Esophagus squamous epithelium (tissue), 5 donors: ENCODE measurements at regions of chr5 and their contacts with region 1.

Region 1: GRCh38 chr5:39716528-39717028 is 291.8 kb upstream of the DAB2 start:
- DNase-seq: no peak
- H3K4me3 ChIP-seq: no peak overlapping the region
- H3K27ac ChIP-seq: no peak overlapping the region
- H3K4me1 ChIP-seq: no peaks in the 10 kb centered on the region
- H3K27me3 ChIP-seq: no peaks in the 10 kb centered on the region
- CTCF ChIP-seq: peak in 5 of 6 experiments; percentile 8 to 36 (median 33)
- POLR2A ChIP-seq: no peak

Region 2: DNA sequence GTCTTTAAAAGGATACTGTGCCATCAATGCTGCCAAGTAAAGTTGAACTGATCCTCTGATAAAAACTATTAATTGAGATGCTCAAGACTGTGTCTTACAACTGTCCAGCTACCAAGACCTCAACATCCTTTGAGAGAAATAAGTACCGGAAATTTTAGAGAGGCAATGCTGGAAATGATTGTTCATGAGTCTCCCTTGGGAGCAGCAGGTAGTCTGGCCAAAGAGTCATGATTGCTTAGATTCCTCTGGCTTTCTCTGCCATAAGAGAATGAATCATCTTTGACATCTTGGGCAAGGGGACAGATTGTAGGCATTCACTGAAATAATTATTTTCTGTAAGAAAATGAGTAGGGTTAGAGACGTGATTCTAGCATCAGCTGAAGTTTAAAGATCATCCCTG is 174.8 kb after region 1 on chr5:
- intact Hi-C with region 1: no loop called
- DNase-seq: no peak
- H3K4me3 ChIP-seq: no peak overlapping the region
- H3K27ac ChIP-seq: no peak overlapping the region
- H3K4me1 ChIP-seq: no peaks in the 10 kb centered on the region
- H3K27me3 ChIP-seq: no peaks in the 10 kb centered on the region
- CTCF ChIP-seq: no peak
- POLR2A ChIP-seq: no peak

Region 3: GRCh38 chr5:40688127-40688761 is 971.7 kb after region 1 on chr5:
- intact Hi-C with region 1: loop called (anchors 5 kb)
- DNase-seq: peak; percentile 12
- H3K4me3 ChIP-seq: peak overlapping the region in 1 of 4 donors; percentile 31
- H3K27ac ChIP-seq: peak overlapping the region in 2 of 4 donors; percentile 35 to 48
- H3K4me1 ChIP-seq: peaks cover 0 to 64% (median 6%) of the 10 kb centered on the region in 3 donors
- H3K27me3 ChIP-seq: no peaks in the 10 kb centered on the region
- CTCF ChIP-seq: peak; percentile 77 to 90 (median 86)
- POLR2A ChIP-seq: no peak